PC-3 (cell line): ENCODE measurements at regions of chr17 and their contacts with region 1.

Region 1: DNA sequence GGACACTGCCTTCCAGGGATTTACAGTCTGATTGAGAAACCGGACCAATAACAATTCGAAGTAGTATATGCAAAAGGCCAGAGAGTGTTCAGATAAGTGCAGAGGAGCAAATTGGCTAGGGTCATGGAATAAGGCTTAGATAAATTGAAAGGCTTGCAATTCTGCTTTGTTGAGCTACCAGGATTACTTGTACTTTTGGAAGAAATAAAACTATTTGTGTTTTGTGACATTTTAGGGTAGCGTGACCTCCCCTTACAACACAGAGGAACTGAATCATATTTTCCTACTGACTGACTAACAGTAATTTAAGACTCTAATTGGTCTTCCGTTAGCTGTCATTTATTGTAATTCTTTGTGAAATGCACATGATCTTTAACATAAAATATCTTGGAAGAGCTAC is 104.7 kb downstream of the PITPNC1 start:
- DNase-seq: peak; percentile 81
- ATAC-seq: peak; percentile 75
- H3K4me3 ChIP-seq: no peak overlapping the region
- H3K27ac ChIP-seq: peak overlapping the region; percentile 86
- H3K4me1 ChIP-seq: peaks cover 40% of the 10 kb centered on the region
- H3K27me3 ChIP-seq: no peaks in the 10 kb centered on the region
- CTCF ChIP-seq: no peak

Region 2: GRCh38 chr17:67503184-67503583 is 21.4 kb after region 1 on chr17:
- CTCF ChIA-PET with region 1: no interaction called
- POLR2A ChIA-PET with region 1: no interaction called
- intact Hi-C with region 1: loop called (anchors 2 kb)
- DNase-seq: peak; percentile 99
- ATAC-seq: peak; percentile 96
- H3K4me3 ChIP-seq: no peak overlapping the region
- H3K27ac ChIP-seq: peak overlapping the region; percentile 74
- H3K4me1 ChIP-seq: peaks cover 28% of the 10 kb centered on the region
- H3K27me3 ChIP-seq: no peaks in the 10 kb centered on the region
- CTCF ChIP-seq: no peak

Region 3: DNA sequence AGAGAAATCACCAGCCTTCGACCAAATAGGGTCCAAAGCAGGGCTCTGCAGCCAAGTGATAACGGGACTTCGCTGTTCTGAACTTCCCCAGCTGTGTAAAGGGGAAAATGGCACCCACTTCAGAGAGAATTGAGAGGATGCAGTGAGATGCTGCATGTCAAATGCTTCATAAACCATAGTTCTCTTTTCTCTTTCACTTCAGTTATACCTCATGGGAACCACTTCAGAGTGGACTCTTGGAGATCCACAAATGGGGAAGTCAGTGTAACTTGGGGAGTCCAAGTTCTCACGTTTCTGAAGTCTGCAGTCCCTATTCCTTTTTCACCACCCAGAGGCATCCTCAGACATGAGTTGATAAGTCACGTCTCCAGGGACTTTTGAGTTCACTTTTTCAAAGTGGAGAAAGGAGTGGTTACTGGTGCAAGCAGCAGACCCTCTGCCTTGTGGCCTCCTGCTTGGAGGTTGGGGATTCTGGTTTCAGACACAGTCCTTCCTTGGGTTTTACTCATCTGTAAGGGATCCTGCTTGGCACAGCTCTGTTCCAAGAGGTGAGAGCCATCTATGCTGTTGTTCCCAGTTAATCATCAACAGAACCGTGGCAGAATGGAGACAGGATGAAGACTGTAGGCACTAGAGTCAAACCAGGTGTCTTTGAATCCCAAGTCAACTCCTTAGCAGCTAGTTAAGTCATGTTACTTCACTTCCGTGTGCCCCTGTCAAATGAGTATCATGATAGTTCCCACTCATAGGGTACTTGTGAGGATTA is 112.5 kb after region 1 on chr17:
- CTCF ChIA-PET with region 1: no interaction called
- POLR2A ChIA-PET with region 1: no interaction called
- intact Hi-C with region 1: no loop called
- DNase-seq: no peak
- ATAC-seq: no peak
- H3K4me3 ChIP-seq: no peak overlapping the region
- H3K27ac ChIP-seq: no peak overlapping the region
- H3K4me1 ChIP-seq: no peaks in the 10 kb centered on the region
- H3K27me3 ChIP-seq: no peaks in the 10 kb centered on the region
- CTCF ChIP-seq: no peak